ENCODE measurements at regions of chr5 and their contacts with region 1.

Region 1: GRCh38 chr5:143403593-143404415 is at the start of gene NR3C1:
- DNase-seq: peak; percentile 87
- ATAC-seq: peak; percentile 72
- H3K4me3 Mint-ChIP-seq: peak within 1 kb of the TSS; percentile 95
- H3K27ac Mint-ChIP-seq: peak within 1 kb of the TSS; percentile 100
- H3K4me1 Mint-ChIP-seq: peaks cover 45% of the 10 kb centered on the region
- H3K27me3 Mint-ChIP-seq: no peaks in the 10 kb centered on the region
- CTCF ChIP-seq: no peak
- total RNA-seq, gene NR3C1: 105 and 110 TPM in 2 replicates

Region 2: DNA sequence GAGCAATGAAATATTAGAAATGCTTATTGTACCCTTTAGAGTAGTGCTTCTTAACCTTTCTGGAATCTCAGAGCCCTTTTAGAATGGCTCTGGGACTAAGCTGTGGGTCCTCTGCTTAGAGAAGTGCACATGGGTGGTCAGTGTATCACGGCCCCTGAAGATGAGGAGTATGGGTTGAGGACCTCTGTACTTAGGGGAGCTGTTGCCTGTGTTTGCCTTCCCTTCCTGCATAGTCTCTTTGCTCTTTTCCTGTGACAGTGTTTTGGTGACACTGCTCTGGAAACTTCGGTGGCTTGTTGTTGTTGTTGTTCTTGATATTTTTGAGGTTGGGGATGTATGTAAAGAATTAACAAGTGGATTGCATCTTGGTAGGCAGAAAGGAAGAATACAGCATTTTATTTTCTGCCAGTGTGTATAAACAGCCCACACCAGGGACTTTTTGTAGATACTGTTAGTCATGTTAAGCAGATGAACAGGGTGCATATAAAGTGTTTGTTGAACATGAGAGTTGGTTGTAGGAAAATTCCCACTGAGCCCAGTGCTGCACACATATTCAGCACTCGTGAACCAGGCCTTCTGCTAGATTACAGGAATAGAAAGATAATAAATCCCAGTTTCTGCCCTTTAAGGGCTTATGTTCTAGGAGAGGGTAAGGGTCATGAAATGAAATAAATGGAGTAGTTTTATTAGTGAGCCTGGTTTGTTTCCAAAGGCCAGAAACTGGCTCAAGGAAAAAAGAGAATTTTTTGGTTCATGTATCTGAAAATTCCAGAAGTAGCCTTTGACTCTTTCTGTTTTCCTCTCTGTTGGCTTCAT is 434.0 kb before region 1 on chr5:
- CTCF ChIA-PET with region 1: no interaction called
- POLR2A ChIA-PET with region 1: no interaction called
- intact Hi-C with region 1: no loop called
- DNase-seq: no peak
- ATAC-seq: no peak
- H3K4me3 Mint-ChIP-seq: no peak overlapping the region
- H3K27ac Mint-ChIP-seq: no peak overlapping the region
- H3K4me1 Mint-ChIP-seq: peaks cover 14% of the 10 kb centered on the region
- H3K27me3 Mint-ChIP-seq: no peaks in the 10 kb centered on the region
- CTCF ChIP-seq: no peak

Region 3: DNA sequence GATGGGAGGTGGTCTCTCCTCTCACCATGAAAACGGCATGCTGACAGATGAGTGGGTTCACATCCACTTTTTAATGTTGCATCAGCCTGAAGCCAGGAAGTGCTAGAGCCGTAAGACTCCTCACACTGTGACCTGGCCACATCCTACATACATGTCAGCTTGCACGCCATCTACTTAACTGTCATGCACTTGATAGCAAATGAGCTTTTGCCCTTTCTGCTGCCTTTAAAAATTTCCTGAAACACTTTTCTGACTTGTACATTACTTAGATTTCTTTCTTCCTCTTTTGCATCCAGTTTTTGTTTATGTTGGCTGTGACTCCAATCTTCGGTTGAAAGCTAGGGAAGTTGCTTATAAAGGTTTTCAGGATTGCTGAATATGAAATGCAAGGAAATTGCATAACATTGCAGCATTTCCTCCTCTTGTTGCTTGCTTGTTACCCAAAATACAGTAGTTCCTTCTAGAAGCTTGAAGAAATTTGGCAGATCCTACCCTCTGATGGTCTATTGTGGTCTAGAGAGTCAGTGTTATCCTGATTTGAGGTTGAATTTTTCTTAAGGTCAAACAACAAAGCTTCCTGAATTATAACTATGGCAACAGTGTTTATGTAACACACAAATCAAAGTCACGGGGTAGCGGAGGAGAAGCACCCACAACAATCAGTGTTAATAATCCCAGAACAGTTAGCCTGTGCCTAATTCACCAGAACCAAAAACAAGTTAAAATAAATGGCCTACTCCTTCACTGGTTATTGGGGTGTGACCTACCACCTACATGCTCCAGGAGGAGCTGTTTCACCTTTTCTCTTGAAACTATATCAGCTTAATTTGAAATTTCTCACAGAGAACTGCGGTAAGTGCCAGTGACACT is 401.1 kb before region 1 on chr5:
- CTCF ChIA-PET with region 1: interaction called, 29 read pairs
- POLR2A ChIA-PET with region 1: interaction called, 78 read pairs
- intact Hi-C with region 1: loop called (anchors 1 kb)
- DNase-seq: no peak
- ATAC-seq: peak; percentile 80
- H3K4me3 Mint-ChIP-seq: peak overlapping the region; percentile 13
- H3K27ac Mint-ChIP-seq: peak overlapping the region; percentile 94
- H3K4me1 Mint-ChIP-seq: peaks cover 85% of the 10 kb centered on the region
- H3K27me3 Mint-ChIP-seq: no peaks in the 10 kb centered on the region
- CTCF ChIP-seq: no peak

Region 4: GRCh38 chr5:143279698-143280097 is 124.1 kb before region 1 on chr5:
- CTCF ChIA-PET with region 1: no interaction called
- POLR2A ChIA-PET with region 1: interaction called, 10 read pairs
- intact Hi-C with region 1: no loop called
- DNase-seq: no peak
- ATAC-seq: no peak
- H3K4me3 Mint-ChIP-seq: no peak overlapping the region
- H3K27ac Mint-ChIP-seq: no peak overlapping the region
- H3K4me1 Mint-ChIP-seq: peaks cover 24% of the 10 kb centered on the region
- H3K27me3 Mint-ChIP-seq: no peaks in the 10 kb centered on the region
- CTCF ChIP-seq: no peak

Region 5: GRCh38 chr5:143426437-143426991 is 22.7 kb after region 1 on chr5:
- CTCF ChIA-PET with region 1: interaction called, 5 read pairs
- POLR2A ChIA-PET with region 1: interaction called, 218 read pairs
- intact Hi-C with region 1: no loop called
- DNase-seq: no peak
- ATAC-seq: peak; percentile 57
- H3K4me3 Mint-ChIP-seq: no peak overlapping the region
- H3K27ac Mint-ChIP-seq: peak overlapping the region; percentile 64
- H3K4me1 Mint-ChIP-seq: peaks cover 32% of the 10 kb centered on the region
- H3K27me3 Mint-ChIP-seq: no peaks in the 10 kb centered on the region
- CTCF ChIP-seq: no peak

Region 6: DNA sequence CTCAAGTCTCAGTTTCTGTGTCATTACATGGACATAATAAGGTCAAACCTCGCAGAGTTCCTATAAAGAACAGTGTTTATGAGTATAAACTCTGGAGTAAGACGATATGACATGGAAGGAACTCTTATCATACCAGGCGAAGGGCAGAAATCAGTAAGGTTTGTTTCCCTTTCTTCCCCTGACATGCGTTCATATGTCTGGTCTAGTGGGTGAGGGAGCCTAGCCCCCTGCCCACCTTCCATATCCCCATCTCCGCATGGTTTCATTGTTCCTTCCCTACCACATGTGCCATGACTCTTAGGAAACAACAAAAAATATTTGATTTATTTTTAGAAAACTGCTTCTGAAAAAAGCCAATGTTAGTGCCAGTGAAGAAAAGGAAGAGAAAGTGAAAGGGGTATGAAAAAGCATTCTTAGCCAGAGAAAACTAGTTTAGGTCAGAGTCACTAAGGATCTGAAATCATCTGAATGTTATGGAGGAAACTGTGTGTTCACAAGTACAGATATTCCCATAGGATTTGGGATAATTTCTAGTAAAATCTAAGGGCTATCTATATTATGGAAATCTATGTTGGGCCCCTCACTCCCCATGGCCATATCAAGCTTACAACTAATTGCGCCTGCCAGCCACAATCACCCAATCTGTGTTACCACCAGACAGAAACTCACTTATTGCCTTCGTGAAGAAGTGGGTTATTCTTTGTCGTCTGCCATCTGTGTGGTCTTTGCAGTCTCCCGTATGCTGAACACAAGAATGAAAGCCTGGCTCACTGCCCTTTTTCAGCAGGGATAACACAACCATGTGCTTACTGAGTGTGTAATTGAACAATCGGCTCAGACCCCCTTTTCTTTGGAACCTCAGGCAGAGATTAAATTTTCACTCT is 388.3 kb after region 1 on chr5:
- CTCF ChIA-PET with region 1: no interaction called
- POLR2A ChIA-PET with region 1: interaction called, 11 read pairs
- intact Hi-C with region 1: no loop called
- DNase-seq: no peak
- ATAC-seq: peak; percentile 73
- H3K4me3 Mint-ChIP-seq: peak overlapping the region; percentile 77
- H3K27ac Mint-ChIP-seq: peak overlapping the region; percentile 93
- H3K4me1 Mint-ChIP-seq: peaks cover 21% of the 10 kb centered on the region
- H3K27me3 Mint-ChIP-seq: no peaks in the 10 kb centered on the region
- CTCF ChIP-seq: no peak

Region 7: DNA sequence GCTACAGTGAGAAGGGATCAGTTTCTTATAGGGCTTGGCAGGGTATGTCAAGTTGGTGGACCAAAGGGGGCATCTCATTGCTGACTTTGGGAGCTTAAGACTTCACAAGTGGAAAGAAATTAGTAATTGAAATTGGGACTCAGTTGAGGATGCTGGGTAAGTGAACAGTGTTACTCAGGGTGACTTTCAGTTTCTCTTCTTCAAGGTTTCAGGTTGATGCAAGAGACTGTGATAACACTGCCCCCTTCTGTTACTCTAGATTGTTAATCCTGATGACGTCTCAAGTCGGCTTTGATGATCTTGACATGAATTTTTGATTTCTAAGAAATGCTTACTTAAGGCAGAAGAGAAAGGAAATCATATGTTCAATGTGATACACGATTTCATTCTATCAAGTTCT is 788.2 kb after region 1 on chr5:
- CTCF ChIA-PET with region 1: no interaction called
- POLR2A ChIA-PET with region 1: interaction called, 8 read pairs
- intact Hi-C with region 1: loop called (anchors 1 kb)
- DNase-seq: no peak
- ATAC-seq: peak; percentile 75
- H3K4me3 Mint-ChIP-seq: no peak overlapping the region
- H3K27ac Mint-ChIP-seq: no peak overlapping the region
- H3K4me1 Mint-ChIP-seq: peaks cover 36% of the 10 kb centered on the region
- H3K27me3 Mint-ChIP-seq: no peaks in the 10 kb centered on the region
- CTCF ChIP-seq: no peak